ENCODE measurements at regions of chr4 and their contacts with region 1.

Region 1: DNA sequence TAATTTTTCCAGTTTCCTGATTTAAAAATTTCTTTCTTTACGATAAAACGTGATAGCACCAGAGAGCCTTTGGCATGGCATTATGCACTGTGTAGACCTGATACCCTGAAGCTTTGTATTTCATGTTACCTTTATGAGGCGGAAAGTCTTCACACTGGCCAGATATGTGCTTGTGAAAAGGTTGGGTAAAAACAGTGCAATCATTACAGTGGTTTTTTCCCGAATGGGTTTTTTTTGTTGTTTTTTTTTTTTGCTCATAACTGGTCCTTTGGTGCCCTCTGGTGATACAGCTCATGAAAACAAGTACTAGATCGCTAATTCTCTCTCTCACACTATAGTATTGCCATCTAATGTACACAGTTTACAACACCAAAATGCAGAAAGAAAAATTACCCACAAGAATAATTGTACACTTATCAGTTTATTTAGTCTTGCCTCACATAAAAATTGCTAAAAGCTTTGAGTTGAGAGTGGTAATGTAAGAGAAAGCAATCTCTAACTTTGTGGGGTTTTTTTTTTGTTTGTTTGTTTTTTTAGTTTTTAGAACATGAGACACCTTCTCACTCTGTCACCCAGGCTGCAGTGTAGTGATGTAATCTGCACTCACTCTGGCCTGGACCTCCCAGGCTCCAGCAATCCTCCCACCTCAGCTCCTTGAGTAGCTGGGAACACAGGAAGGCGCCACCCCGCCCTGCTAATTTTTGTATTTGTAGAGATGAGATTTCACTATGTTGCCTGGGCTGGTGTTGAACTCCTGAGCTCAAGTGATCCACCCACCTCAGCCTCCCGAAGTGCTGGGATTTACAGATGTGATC is 21.3 kb downstream of the SPCS3 start:
- DNase-seq: peak in 2 of 9 experiments; percentile 59 to 68
- ATAC-seq: peak; percentile 51
- H3K4me3 ChIP-seq: no peak overlapping the region
- H3K4me3 Mint-ChIP-seq: no peak overlapping the region
- H3K27ac ChIP-seq: no peak overlapping the region
- H3K27ac Mint-ChIP-seq: no peak overlapping the region
- H3K4me1 ChIP-seq: no peaks in the 10 kb centered on the region
- H3K4me1 Mint-ChIP-seq: peaks cover 10% of the 10 kb centered on the region
- H3K27me3 ChIP-seq: no peaks in the 10 kb centered on the region
- H3K27me3 Mint-ChIP-seq: no peaks in the 10 kb centered on the region
- CTCF ChIP-seq: peak; percentile 77

Region 2: GRCh38 chr4:174365018-174365587 is 1976.0 kb before region 1 on chr4:
- CTCF ChIA-PET with region 1: no interaction called
- POLR2A ChIA-PET with region 1: no interaction called
- intact Hi-C with region 1: loop called in 1 of 2 experiments (anchors 2 kb)
- DNase-seq: peak in 3 of 9 experiments; percentile 12 to 53 (median 49)
- ATAC-seq: no peak
- H3K4me3 ChIP-seq: no peak overlapping the region
- H3K4me3 Mint-ChIP-seq: no peak overlapping the region
- H3K27ac ChIP-seq: no peak overlapping the region
- H3K27ac Mint-ChIP-seq: no peak overlapping the region
- H3K4me1 ChIP-seq: no peaks in the 10 kb centered on the region
- H3K4me1 Mint-ChIP-seq: no peaks in the 10 kb centered on the region
- H3K27me3 ChIP-seq: no peaks in the 10 kb centered on the region
- H3K27me3 Mint-ChIP-seq: peaks cover 2% of the 10 kb centered on the region
- CTCF ChIP-seq: peak; percentile 70

Region 3: DNA sequence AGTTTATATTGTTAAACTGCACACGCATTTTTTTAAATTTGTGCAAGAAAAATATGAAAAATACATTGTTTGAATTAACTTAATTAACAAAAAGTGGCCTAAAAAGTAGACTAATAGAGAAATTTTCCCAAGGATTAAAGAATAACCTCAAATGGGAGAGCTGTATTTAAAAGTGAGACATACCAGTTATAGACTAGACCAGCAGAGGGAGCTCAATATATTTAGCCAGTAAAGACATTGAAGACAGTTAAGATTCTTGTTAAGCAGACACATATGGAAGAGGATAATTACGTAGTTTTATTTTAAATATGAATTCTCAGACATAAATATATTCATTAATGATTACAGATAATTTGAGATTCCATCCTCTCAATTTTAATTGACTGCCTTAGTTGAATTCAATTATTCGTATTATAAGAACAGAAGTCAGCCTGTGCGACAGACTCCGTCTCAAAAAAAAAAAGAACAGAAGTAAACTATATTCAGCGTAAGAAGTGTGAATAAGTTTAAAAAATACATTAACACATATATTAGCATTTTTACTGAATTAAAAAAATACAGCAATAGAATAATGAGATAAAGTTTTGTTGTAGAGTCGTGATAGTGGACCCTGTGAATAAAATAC is 1576.9 kb before region 1 on chr4:
- CTCF ChIA-PET with region 1: interaction called, 3 read pairs
- POLR2A ChIA-PET with region 1: no interaction called
- intact Hi-C with region 1: loop called in 1 of 2 experiments (anchors 5 kb)
- DNase-seq: peak in 2 of 9 experiments; percentile 4 to 8
- ATAC-seq: no peak
- H3K4me3 ChIP-seq: no peak overlapping the region
- H3K4me3 Mint-ChIP-seq: no peak overlapping the region
- H3K27ac ChIP-seq: no peak overlapping the region
- H3K27ac Mint-ChIP-seq: no peak overlapping the region
- H3K4me1 ChIP-seq: no peaks in the 10 kb centered on the region
- H3K4me1 Mint-ChIP-seq: no peaks in the 10 kb centered on the region
- H3K27me3 ChIP-seq: no peaks in the 10 kb centered on the region
- H3K27me3 Mint-ChIP-seq: no peaks in the 10 kb centered on the region
- CTCF ChIP-seq: peak; percentile 20

Region 4: GRCh38 chr4:176034499-176034898 is 306.6 kb before region 1 on chr4:
- CTCF ChIA-PET with region 1: interaction called, 12 read pairs
- POLR2A ChIA-PET with region 1: no interaction called
- intact Hi-C with region 1: loop called (anchors 1 to 2 kb)
- DNase-seq: peak in 2 of 9 experiments; percentile 29 to 48
- ATAC-seq: no peak
- H3K4me3 ChIP-seq: no peak overlapping the region
- H3K4me3 Mint-ChIP-seq: no peak overlapping the region
- H3K27ac ChIP-seq: no peak overlapping the region
- H3K27ac Mint-ChIP-seq: no peak overlapping the region
- H3K4me1 ChIP-seq: no peaks in the 10 kb centered on the region
- H3K4me1 Mint-ChIP-seq: no peaks in the 10 kb centered on the region
- H3K27me3 ChIP-seq: no peaks in the 10 kb centered on the region
- H3K27me3 Mint-ChIP-seq: peaks cover 2% of the 10 kb centered on the region
- CTCF ChIP-seq: no peak

Region 5: DNA sequence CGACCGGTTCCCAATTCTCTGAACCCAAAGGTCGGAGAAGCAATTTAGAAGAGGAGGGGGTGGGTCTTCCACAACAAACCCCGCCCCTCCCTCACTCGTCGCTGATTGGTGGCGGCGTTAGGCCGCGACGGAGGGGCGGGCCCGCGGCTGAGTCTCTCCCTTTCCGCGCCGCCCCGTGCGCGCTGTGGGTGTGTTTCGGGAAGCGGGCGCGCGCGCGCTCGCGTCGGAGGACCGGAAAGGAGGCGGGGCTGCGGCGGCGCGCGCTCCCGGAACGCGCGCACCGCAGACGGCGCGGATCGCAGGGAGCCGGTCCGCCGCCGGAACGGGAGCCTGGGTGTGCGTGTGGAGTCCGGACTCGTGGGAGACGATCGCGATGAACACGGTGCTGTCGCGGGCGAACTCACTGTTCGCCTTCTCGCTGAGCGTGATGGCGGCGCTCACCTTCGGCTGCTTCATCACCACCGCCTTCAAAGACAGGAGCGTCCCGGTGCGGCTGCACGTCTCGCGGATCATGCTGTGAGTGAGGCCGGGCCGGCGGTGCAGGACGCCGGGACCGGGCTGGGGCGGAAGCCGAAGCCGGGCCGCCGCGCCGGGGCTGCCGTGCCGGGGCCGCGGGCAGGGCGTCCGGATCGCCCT is 21.3 kb before region 1 on chr4 and contains the start of gene SPCS3:
- CTCF ChIA-PET with region 1: interaction called, 21 read pairs
- POLR2A ChIA-PET with region 1: no interaction called
- intact Hi-C with region 1: loop called in 1 of 2 experiments (anchors 2 kb)
- DNase-seq: peak; percentile 90 to 98 (median 95)
- ATAC-seq: peak; percentile 92
- H3K4me3 ChIP-seq: peak within 1 kb of the TSS; percentile 88 to 93
- H3K4me3 Mint-ChIP-seq: peak within 1 kb of the TSS; percentile 90
- H3K27ac ChIP-seq: peak within 1 kb of the TSS; percentile 91 to 96
- H3K27ac Mint-ChIP-seq: peak within 1 kb of the TSS; percentile 96
- H3K4me1 ChIP-seq: peaks cover 38% of the 10 kb centered on the region
- H3K4me1 Mint-ChIP-seq: peaks cover 54% of the 10 kb centered on the region
- H3K27me3 ChIP-seq: no peaks in the 10 kb centered on the region
- H3K27me3 Mint-ChIP-seq: no peaks in the 10 kb centered on the region
- CTCF ChIP-seq: no peak
- total RNA-seq, gene SPCS3: 162 to 170 TPM

Region 6: GRCh38 chr4:176357359-176358082 is 16.4 kb after region 1 on chr4:
- CTCF ChIA-PET with region 1: no interaction called
- POLR2A ChIA-PET with region 1: no interaction called
- intact Hi-C with region 1: no loop called
- DNase-seq: no peak
- ATAC-seq: no peak
- H3K4me3 ChIP-seq: no peak overlapping the region
- H3K4me3 Mint-ChIP-seq: no peak overlapping the region
- H3K27ac ChIP-seq: no peak overlapping the region
- H3K27ac Mint-ChIP-seq: no peak overlapping the region
- H3K4me1 ChIP-seq: no peaks in the 10 kb centered on the region
- H3K4me1 Mint-ChIP-seq: no peaks in the 10 kb centered on the region
- H3K27me3 ChIP-seq: no peaks in the 10 kb centered on the region
- H3K27me3 Mint-ChIP-seq: no peaks in the 10 kb centered on the region
- CTCF ChIP-seq: no peak